GM13976 (cell line): ENCODE measurements at regions of chr12 and their contacts with region 1.

Region 1: GRCh38 chr12:56759263-56759908 is 3.7 kb upstream of the HSD17B6 start:
- DNase-seq: no peak
- CTCF ChIP-seq: no peak

Region 2: GRCh38 chr12:57005980-57006808 is 246.8 kb after region 1 on chr12 and contains the start of gene ZBTB39:
- in situ Hi-C with region 1: loop called (anchors 5 kb)
- DNase-seq: peak; percentile 94
- CTCF ChIP-seq: peak; percentile 62